ENCODE measurements at regions of chr20 and their contacts with region 1.

Region 1: GRCh38 chr20:62921119-62921687 is 5.1 kb downstream of the DIDO1 start:
- DNase-seq: peak; percentile 87
- ATAC-seq: peak; percentile 67
- H3K4me3 Mint-ChIP-seq: peak overlapping the region; percentile 13
- H3K27ac Mint-ChIP-seq: peak overlapping the region; percentile 75
- H3K4me1 Mint-ChIP-seq: peaks cover 76% of the 10 kb centered on the region
- H3K27me3 Mint-ChIP-seq: no peaks in the 10 kb centered on the region

Region 2: DNA sequence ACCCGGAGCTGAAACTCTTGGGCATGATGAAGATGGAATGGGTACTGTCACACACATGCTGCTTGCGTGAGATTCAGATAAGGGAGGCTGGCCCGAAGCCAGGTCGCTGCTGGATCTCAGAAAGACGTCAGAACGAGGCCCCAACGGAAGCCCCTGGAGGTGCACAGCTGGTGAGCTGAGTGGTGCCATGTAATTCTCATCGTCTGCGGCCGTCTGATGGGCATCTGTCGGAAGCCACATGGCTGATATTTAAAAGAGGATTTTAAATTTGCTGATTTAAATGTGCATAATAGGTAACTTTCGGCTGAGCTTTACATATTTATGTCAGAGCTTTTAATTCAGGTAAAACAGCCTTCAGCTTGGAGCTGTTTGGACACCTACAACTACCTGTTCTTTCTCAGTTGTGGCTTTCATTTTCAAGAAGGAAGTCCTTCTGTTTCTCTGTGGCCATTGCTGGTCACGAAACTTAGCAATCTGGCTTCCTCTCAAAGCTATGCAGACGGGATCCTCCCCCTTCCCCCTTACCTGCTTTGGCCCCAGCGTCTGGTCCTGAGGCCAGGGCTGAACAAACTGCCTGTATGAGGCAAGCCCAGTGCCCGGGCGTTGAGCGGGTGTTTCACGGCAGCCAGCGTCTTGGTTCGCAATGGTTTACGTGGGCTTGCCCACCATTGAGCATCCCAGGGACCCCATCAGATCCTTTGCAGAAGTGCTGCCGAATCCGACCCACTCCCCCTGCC is 269.8 kb before region 1 on chr20:
- CTCF ChIA-PET with region 1: no interaction called
- POLR2A ChIA-PET with region 1: no interaction called
- intact Hi-C with region 1: no loop called
- DNase-seq: peak; percentile 90
- ATAC-seq: peak; percentile 74
- H3K4me3 Mint-ChIP-seq: peak overlapping the region; percentile 65
- H3K27ac Mint-ChIP-seq: peak overlapping the region; percentile 83
- H3K4me1 Mint-ChIP-seq: peaks cover 35% of the 10 kb centered on the region
- H3K27me3 Mint-ChIP-seq: no peaks in the 10 kb centered on the region

Region 3: GRCh38 chr20:62846188-62846890 is 74.9 kb before region 1 on chr20:
- CTCF ChIA-PET with region 1: no interaction called
- POLR2A ChIA-PET with region 1: no interaction called
- intact Hi-C with region 1: no loop called
- DNase-seq: no peak
- ATAC-seq: no peak
- H3K4me3 Mint-ChIP-seq: no peak overlapping the region
- H3K27ac Mint-ChIP-seq: no peak overlapping the region
- H3K4me1 Mint-ChIP-seq: no peaks in the 10 kb centered on the region
- H3K27me3 Mint-ChIP-seq: no peaks in the 10 kb centered on the region

Region 4: DNA sequence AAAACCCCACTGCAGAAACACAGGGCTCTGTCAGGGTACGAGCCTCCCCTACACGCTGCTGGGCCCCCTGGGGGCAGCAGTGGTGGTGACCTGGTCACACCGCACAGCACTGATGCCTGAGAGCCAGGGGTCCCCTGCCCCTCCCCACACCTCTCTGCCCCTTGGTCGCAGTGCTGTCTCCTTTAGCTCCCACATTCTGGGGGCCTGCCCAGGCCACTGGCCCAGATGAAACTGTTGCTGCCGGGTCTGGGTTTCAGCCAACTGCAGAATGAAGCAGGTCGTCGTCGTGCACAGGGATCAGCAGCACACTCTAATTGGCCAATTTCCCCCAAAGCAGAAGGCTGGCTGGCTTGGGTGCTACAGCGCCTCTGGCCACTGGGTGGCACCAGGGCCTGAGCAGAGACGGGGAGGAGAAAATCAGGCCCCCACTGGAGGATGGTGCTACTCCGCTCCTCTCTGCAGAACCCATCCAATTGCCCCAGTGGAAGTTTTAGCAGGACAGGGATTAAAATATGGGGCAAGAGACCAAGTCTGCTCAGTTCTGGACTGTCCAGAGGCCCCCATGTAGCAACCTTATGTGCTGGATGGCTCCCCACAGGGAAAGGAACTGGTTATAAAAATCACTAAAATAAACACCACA is 21.0 kb before region 1 on chr20:
- CTCF ChIA-PET with region 1: interaction called, 140 read pairs
- POLR2A ChIA-PET with region 1: interaction called, 6 read pairs
- intact Hi-C with region 1: loop called (anchors 1 to 2 kb)
- DNase-seq: peak; percentile 86
- ATAC-seq: peak; percentile 93
- H3K4me3 Mint-ChIP-seq: no peak overlapping the region
- H3K27ac Mint-ChIP-seq: peak overlapping the region; percentile 56
- H3K4me1 Mint-ChIP-seq: peaks cover 38% of the 10 kb centered on the region
- H3K27me3 Mint-ChIP-seq: no peaks in the 10 kb centered on the region

Region 5: DNA sequence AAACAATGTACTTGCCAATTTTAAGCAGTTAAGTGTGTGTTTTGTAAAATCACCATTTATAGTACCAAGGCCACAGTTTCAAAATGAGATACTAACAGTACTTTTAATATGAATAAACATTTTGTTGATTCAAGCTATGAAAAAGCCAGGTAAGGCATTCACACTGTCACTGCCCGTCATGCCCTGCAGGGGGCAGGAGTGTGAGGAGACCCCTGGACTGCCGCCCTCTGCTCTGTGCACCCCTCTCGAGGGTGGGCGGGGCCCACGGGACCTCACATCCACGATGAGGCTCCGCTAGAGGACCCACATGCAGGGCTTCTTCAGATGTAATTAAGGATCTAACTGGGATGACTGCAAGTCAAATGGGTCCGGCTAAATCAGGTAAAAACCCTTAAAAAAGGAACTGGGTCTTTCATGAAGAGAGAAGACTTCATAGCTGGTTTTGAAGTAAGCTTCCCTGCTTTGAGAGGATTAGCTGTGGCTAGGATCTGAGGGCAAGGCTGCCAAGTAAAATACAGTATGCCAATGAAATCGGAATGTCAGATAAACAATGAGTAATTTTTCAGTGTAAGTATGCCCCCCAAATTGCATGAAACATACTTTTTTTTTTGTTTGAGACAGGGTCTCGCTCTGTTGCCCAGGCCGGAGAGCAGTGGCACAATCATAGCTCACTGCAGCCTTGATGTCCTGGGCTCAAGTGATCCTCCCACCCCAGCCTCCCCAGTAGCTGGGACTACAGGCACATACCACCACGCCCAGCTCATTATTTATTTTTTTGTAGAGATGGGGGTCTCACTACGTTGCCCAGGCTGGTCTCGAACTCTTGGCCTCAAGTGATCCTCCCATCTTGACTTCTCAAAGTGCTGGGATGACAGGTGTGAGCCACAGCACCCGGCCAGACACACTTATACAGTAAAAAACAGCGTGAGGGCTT is 13.6 kb before region 1 on chr20:
- CTCF ChIA-PET with region 1: interaction called, 140 read pairs
- POLR2A ChIA-PET with region 1: interaction called, 6 read pairs
- intact Hi-C with region 1: no loop called
- DNase-seq: peak; percentile 62
- ATAC-seq: peak; percentile 76
- H3K4me3 Mint-ChIP-seq: no peak overlapping the region
- H3K27ac Mint-ChIP-seq: peak overlapping the region; percentile 58
- H3K4me1 Mint-ChIP-seq: peaks cover 11% of the 10 kb centered on the region
- H3K27me3 Mint-ChIP-seq: no peaks in the 10 kb centered on the region